ENCODE measurements at regions of chr7 and their contacts with region 1.

Region 1: DNA sequence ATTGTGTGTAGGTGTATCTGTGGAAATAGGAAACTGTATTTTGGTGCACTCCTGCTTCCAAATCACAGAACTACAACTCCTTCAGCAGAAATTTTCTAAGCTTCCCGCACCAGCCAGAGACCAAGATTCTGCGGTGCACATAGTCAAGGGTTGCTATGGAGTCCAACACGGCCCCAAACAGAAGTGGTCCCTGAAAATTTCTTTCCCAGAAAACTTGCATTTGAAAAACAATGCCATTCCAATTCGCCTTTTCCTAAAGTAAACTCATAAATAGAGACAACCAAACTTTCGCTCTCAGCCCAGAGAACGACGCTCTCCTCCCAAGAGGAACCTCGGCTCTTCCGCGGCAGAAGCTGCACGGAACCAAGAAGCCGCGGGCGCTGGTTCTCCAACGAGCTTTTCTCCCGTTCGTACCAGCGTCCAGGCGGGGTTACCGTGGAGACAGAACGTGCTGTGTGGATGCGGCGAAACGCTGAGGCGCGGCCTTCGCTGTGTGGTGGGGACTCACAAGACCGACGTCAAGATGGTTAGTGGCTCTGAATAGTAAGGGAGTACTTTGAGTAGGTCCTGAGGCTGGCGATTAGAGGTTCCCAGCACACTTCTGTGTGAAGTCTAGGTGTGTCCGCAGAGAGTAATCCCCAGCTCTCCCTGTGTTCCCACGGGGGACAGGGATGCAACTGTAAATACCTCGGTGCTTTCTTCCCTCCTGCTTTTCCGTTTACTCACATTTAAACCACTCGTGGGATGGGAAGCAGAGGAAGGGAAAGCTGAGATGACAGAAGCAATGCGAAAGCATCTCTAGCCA is 24.0 kb upstream of the ZC3HAV1 start:
- DNase-seq: peak; percentile 90
- H3K4me3 Mint-ChIP-seq: peak overlapping the region; percentile 80
- H3K27ac Mint-ChIP-seq: peak overlapping the region; percentile 36
- H3K4me1 Mint-ChIP-seq: peaks cover 32% of the 10 kb centered on the region
- H3K27me3 Mint-ChIP-seq: peaks cover 4% of the 10 kb centered on the region

Region 2: DNA sequence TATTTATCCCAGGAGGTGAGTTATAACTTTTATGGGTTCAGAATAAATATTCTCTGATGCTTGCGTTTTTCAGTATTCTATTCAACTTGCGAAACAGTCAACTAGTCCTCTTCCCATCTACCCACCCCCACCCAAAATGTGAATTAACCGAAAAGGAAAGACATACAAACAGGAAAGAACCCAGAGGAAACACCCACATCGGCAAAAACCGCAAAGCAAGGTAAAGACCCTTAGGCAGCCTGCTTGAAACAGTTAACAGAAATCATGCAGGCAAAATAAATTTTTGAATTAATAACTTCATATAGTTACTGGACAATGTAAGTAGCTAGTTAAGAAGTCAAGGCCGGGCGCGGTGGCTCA is 29.5 kb before region 1 on chr7:
- CTCF ChIA-PET with region 1: no interaction called
- POLR2A ChIA-PET with region 1: interaction called, 16 read pairs
- DNase-seq: peak; percentile 54
- H3K4me3 Mint-ChIP-seq: peak overlapping the region; percentile 92
- H3K27ac Mint-ChIP-seq: peak overlapping the region; percentile 90
- H3K4me1 Mint-ChIP-seq: peaks cover 24% of the 10 kb centered on the region
- H3K27me3 Mint-ChIP-seq: no peaks in the 10 kb centered on the region

Region 3: DNA sequence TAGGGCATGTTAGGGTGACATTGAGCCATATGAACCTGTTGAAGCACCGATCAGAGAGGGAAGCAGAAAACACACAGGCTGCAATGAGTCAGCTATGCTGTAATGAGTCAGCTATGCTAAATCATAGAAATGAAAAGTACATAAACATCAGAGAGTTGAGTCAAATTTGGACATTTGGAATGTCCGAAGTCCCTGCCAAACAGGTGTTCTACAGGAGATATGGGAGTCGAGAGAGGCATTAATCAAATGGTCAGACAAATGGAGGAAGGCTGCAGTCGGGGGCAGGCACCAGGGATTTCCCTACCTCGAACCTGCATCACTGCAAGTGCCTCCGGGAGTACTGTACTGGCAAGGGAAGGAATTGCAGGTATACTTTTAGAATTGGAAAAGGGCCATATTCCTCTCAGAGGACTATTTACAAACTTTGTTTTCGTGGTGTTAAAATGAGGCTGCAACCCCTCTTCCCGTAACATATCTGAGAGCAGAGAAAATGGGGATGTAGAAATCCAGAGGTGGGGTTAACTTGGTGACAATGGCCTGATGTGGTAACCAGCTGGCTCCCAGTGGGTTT is 15.2 kb before region 1 on chr7:
- CTCF ChIA-PET with region 1: interaction called, 7 read pairs
- POLR2A ChIA-PET with region 1: interaction called, 33 read pairs
- DNase-seq: peak; percentile 57
- H3K4me3 Mint-ChIP-seq: peak overlapping the region; percentile 56
- H3K27ac Mint-ChIP-seq: peak overlapping the region; percentile 56
- H3K4me1 Mint-ChIP-seq: peaks cover 31% of the 10 kb centered on the region
- H3K27me3 Mint-ChIP-seq: no peaks in the 10 kb centered on the region

Region 4: DNA sequence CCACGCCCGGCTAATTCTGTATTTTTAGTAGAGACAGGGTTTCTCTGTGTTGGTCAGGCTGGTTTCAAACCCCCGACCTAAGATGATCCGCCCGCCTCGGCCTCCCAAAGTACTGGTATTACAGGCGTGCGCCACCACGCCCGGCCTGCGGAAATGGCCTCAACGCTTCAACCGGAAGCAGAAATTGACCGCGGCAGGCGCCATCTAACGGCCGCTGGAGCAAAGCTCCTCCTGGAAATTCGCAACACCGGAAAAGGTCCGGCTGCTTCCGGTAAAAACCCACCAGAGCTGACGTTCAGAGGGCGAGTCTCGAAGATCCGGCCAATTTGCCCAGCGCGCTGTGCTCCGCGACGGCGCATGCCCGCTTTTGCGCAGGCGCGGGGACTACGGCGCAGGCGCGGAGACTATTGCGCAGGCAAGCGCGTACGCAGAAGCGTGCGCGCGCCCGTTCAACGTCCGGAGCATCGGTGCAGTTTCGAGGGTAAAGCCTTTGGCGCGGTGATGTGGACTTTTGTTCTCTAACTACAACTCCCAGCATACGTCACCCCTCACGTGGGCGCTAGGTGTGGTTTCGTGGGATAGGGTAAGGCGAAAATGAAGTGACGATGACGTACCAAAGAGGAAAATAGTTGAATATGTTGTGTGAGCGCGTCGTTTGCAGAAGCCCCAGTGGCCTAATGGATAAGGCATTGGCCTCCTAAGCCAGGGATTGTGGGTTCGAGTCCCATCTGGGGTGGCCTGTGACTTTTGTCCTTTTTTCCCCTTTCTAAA is 206.7 kb after region 1 on chr7:
- CTCF ChIA-PET with region 1: interaction called, 11 read pairs
- POLR2A ChIA-PET with region 1: interaction called, 8 read pairs
- DNase-seq: peak; percentile 99
- H3K4me3 Mint-ChIP-seq: peak overlapping the region; percentile 83
- H3K27ac Mint-ChIP-seq: peak overlapping the region; percentile 96
- H3K4me1 Mint-ChIP-seq: peaks cover 27% of the 10 kb centered on the region
- H3K27me3 Mint-ChIP-seq: peaks cover 2% of the 10 kb centered on the region

Measured in activated CD4-positive, alpha-beta memory T cell treated with anti-CD3 and anti-CD28 coated beads, Interleukin-2, amount 10 ng/mL, durations not matched to agents 7 days and 5 days (primary cell).